ENCODE measurements at regions of chr22 and their contacts with region 1.

Region 1: GRCh38 chr22:39170825-39171622 is 18.5 kb upstream of the CBX7 start:
- DNase-seq: peak; percentile 92
- ATAC-seq: peak; percentile 91
- H3K4me3 ChIP-seq: no peak overlapping the region
- H3K27ac ChIP-seq: no peak overlapping the region
- H3K4me1 ChIP-seq: peaks cover 40% of the 10 kb centered on the region
- H3K27me3 ChIP-seq: no peaks in the 10 kb centered on the region
- CTCF ChIP-seq: peak; percentile 98

Region 2: DNA sequence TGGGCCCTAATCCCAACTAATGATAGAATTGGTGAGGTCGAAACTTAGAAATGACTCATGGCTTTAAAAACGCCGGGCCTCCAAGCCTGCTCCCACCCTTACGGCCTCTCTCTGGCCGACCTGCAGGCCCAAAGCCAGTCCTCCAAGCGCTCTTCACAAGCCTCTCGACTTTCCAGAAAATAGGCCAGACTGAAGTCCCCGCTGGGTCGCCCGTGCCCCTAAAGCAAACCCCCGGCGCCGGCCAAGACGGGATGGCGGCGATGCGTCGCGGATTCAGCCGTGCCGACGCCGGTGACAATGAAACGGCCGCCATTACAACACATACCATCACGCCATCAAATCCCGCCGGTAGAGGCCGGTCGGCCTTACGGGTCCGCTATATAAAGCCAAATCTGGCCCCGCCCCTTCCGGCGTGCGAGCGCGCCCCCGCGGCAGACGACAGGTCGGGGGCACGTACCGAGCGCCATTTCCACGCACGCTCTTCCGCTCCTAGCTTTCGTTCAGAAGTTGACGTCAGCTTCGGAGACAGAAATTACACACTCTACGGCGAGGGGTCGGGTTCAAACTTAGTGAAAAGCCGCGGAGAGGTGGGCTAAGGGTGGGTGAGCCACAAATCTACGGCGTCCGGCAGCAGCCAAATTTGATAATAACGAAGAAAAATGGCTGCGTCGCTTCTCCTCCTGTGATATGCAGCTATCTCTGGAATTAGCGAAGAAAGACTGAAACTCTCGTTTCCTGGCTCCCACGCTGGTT is 148.4 kb after region 1 on chr22 and contains the start of gene RPL3:
- intact Hi-C with region 1: loop called (anchors 5 kb)
- DNase-seq: peak; percentile 97
- ATAC-seq: peak; percentile 94
- H3K4me3 ChIP-seq: peak within 1 kb of the TSS; percentile 78
- H3K27ac ChIP-seq: peak within 1 kb of the TSS; percentile 98
- H3K4me1 ChIP-seq: peaks cover 46% of the 10 kb centered on the region
- H3K27me3 ChIP-seq: no peaks in the 10 kb centered on the region
- CTCF ChIP-seq: peak; percentile 35
- total RNA-seq, gene RPL3: 1,573 TPM